Ovary (tissue), 10 donors: ENCODE measurements at regions of chr7 and their contacts with region 1.

Region 1: GRCh38 chr7:147564771-147565476 is 1025.6 kb upstream of the C7orf33 start:
- DNase-seq: no peak
- H3K4me3 ChIP-seq: no peak overlapping the region
- H3K27ac ChIP-seq: no peak overlapping the region
- H3K4me1 ChIP-seq: no peaks in the 10 kb centered on the region
- H3K27me3 ChIP-seq: no peaks in the 10 kb centered on the region
- CTCF ChIP-seq: no peak
- EP300 ChIP-seq: no peak
- POLR2A ChIP-seq: no peak

Region 2: DNA sequence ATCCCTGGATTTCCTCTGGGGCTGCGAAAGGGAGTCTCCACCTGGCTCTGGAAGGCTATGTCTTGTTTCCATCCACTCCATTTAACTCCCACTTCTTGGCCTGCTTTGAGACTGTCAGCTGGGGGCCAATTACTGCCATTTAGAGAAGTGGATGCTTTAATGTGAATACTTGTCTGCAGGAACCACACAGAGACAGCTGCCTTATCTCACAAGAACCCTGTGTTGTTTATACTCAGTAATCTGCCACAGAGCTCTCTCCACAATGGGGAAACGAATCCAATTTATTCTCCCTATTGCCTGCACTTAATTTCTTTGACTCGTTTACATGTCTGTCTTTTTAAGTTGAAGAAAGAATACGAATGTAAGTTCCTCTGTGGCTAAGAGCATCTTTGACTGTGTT is 238.7 kb after region 1 on chr7:
- intact Hi-C with region 1: loop called in 1 of 4 experiments (anchors 5 kb)
- DNase-seq: peak in 1 of 5 donors; percentile 9
- H3K4me3 ChIP-seq: no peak overlapping the region
- H3K27ac ChIP-seq: no peak overlapping the region
- H3K4me1 ChIP-seq: no peaks in the 10 kb centered on the region
- H3K27me3 ChIP-seq: no peaks in the 10 kb centered on the region
- CTCF ChIP-seq: no peak
- EP300 ChIP-seq: no peak
- POLR2A ChIP-seq: no peak